Left ventricle myocardium superior (tissue), 1 donor: ENCODE measurements at regions of chrX and their contacts with region 1.

Region 1: DNA sequence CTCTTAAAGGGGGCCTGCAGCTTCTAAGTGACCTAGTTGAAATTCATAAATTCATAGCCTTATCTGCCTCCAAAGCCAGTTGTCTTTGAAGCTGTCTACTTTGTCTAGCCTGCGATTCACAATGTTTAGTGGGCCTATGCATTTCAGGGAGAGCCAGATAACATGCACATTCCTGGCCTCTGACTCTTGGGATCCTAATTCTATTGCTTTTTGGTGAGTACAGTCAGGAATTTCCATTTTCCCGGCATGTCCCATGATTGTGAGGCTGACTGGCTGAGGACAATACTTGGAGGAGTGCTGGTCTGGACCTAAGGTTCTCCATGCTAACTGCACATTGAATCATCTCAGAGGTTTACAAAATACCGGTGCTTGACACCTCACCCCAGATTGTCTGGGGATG is 155.0 kb downstream of the MSL3 start:
- DNase-seq: no peak
- ATAC-seq: no peak

Region 2: DNA sequence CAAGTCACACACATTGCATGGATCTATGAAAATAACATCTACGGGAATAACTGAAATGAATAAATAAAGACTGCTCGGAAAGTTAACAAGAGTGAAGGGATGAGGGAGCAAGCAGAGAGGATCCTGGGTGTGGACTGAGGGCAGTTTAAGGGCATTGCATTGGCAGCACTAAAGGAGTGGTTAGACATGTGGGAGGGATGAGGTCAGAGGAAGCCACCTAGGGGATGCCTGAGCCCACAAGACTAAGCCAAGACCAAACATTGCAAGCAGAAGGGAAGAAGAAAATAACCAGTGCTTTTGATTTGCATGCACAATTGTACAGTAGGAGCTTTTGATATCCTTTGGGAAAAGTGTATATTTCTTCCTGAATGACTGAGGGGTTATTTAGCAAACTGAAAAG is 48.8 kb before region 1 on chrX:
- intact Hi-C with region 1: loop called (anchors 2 kb)
- DNase-seq: no peak
- ATAC-seq: no peak

Region 3: DNA sequence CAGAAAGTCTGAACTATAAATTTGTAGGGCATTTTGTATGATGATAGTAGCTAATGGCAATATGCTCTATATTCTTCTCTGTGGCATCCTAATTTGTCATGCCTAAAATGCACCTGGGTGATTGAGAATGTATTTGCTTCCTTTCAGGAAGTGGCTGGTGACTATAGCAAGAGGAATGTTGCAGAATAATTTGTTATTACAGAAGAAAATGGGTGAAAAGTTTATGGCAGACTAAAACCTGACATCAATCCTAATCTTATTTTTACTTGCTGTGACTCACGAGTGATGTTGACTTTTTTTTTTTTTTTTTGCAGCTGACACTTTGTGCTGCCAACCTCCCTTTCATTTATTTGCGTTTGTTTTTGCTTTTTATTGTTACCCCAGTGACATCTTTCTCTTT is 13.9 kb before region 1 on chrX:
- intact Hi-C with region 1: no loop called
- DNase-seq: no peak
- ATAC-seq: no peak